ENCODE measurements at regions of chr5 and their contacts with region 1.

Region 1: GRCh38 chr5:11266331-11266730 is 505.3 kb upstream of the DAP start:
- DNase-seq: no peak
- H3K4me3 ChIP-seq: no peak overlapping the region
- H3K27ac ChIP-seq: no peak overlapping the region
- H3K4me1 ChIP-seq: no peaks in the 10 kb centered on the region
- H3K27me3 ChIP-seq: peaks cover 12% of the 10 kb centered on the region; the same call in 1 of the 2 replicates
- CTCF ChIP-seq: no peak
- EP300 ChIP-seq: no peak
- RAD21 ChIP-seq: no peak

Region 2: GRCh38 chr5:11277323-11277722 is 11.0 kb after region 1 on chr5:
- CTCF ChIA-PET with region 1: interaction called, 13 read pairs
- POLR2A ChIA-PET with region 1: no interaction called
- DNase-seq: no peak
- H3K4me3 ChIP-seq: no peak overlapping the region
- H3K27ac ChIP-seq: no peak overlapping the region
- H3K4me1 ChIP-seq: no peaks in the 10 kb centered on the region
- H3K27me3 ChIP-seq: no peaks in the 10 kb centered on the region
- CTCF ChIP-seq: no peak
- EP300 ChIP-seq: no peak
- RAD21 ChIP-seq: no peak